Colonic mucosa (tissue), 4 donors: ENCODE measurements at regions of chr16 and their contacts with region 1.

Region 1: GRCh38 chr16:74309789-74310781 is 13.5 kb downstream of the PSMD7 start:
- DNase-seq: peak; percentile 30
- H3K4me3 ChIP-seq: no peak overlapping the region
- H3K27ac ChIP-seq: no peak overlapping the region
- H3K4me1 ChIP-seq: no peaks in the 10 kb centered on the region
- H3K27me3 ChIP-seq: no peaks in the 10 kb centered on the region
- CTCF ChIP-seq: peak; percentile 67

Region 2: DNA sequence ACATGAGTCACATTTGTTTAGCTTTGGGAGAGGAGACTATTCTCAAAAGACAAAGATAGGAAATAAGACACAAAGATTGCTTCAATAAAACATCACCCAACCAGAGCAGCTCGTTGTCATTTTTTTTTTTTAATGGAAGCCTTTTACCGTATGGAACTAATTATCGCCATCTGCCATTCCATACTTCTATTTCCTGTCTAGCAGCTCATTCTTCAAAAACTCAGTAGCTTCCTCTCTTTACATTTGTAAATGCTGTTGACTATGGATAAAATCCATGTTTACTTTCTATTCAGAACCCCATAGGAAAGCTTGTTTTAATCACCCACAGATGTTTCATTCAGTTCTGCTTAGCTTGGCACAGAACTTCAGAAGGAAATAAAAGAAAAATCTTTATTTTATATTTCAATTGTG is 123.5 kb before region 1 on chr16:
- intact Hi-C with region 1: no loop called
- DNase-seq: no peak
- H3K4me3 ChIP-seq: no peak overlapping the region
- H3K27ac ChIP-seq: no peak overlapping the region
- H3K4me1 ChIP-seq: no peaks in the 10 kb centered on the region
- H3K27me3 ChIP-seq: no peaks in the 10 kb centered on the region
- CTCF ChIP-seq: no peak

Region 3: DNA sequence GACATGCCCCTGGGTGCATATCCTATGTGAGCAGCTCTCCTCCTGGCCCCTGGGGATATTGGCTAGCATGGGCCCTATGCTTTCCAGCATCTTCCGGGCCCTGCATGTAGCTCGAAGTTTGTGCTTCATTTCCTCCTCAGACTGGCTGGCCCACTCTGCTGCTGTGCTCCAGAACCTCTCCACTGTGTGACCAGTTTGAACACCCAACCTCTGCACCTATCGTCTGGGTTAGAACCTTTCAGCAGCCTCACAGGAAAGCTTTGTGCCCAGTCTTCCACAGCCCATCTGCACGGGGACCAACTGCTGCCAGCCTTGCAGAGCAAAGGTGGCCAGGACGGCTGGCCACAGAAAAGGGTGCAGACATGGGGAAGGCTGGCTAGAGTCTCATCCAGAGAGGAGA is 121.4 kb after region 1 on chr16:
- intact Hi-C with region 1: loop called (anchors 5 kb)
- DNase-seq: no peak
- H3K4me3 ChIP-seq: no peak overlapping the region
- H3K27ac ChIP-seq: no peak overlapping the region
- H3K4me1 ChIP-seq: no peaks in the 10 kb centered on the region
- H3K27me3 ChIP-seq: no peaks in the 10 kb centered on the region
- CTCF ChIP-seq: no peak

Region 4: GRCh38 chr16:74623214-74623842 is 313.2 kb after region 1 on chr16:
- intact Hi-C with region 1: loop called (anchors 10 kb)
- DNase-seq: no peak
- H3K4me3 ChIP-seq: no peak overlapping the region
- H3K27ac ChIP-seq: no peak overlapping the region
- H3K4me1 ChIP-seq: no peaks in the 10 kb centered on the region
- H3K27me3 ChIP-seq: no peaks in the 10 kb centered on the region
- CTCF ChIP-seq: peak; percentile 44